Uterus (tissue), 4 donors: ENCODE measurements at regions of chr16 and their contacts with region 1.

Region 1: GRCh38 chr16:14300705-14301168 is 229.6 kb downstream of the MRTFB start:
- DNase-seq: peak; percentile 63 to 77
- H3K4me3 ChIP-seq: peak overlapping the region; percentile 78 to 99
- H3K27ac ChIP-seq: peak overlapping the region; percentile 68 to 76
- H3K4me1 ChIP-seq: no peaks in the 10 kb centered on the region
- H3K27me3 ChIP-seq: no peaks in the 10 kb centered on the region
- CTCF ChIP-seq: peak; percentile 57 to 71 (median 64)
- POLR2A ChIP-seq: no peak

Region 2: DNA sequence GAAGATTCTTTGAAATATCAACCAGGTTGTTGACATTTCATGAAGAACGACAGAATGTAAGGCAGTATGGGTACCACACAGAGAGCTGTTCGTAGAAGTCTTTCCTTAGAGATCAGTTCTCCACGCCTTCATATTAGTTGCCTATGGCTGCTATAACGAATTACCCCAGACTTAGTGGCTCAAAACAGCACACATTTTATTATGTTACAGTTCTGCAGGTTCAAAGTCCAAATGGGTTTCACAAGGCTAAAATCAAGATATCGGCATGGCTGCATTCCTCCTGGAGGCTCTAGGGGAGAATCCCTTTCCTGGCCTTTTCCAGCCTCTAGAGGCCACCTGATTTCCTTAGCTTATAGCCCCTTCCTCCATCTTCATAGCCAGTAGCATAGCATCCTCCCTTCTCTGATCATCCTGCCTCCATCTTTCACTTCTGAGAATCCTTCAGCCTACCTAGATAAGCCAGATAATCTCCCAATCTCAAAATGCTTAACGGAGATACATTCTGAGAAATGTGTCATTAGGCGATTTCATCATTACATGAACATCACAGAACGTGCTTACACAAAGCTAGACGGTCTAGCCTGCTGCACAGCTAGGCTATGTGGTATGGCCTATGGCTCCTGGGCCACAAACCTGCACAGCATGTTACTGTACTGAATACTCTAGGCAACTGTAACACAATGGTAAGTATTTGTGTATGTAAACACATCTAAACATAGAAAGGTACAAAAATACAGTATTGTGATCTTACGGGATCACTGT is 354.8 kb before region 1 on chr16:
- intact Hi-C with region 1: no loop called
- DNase-seq: no peak
- H3K4me3 ChIP-seq: no peak overlapping the region
- H3K27ac ChIP-seq: no peak overlapping the region
- H3K4me1 ChIP-seq: no peaks in the 10 kb centered on the region
- H3K27me3 ChIP-seq: no peaks in the 10 kb centered on the region
- CTCF ChIP-seq: no peak
- POLR2A ChIP-seq: no peak

Region 3: GRCh38 chr16:14070877-14071575 is 229.7 kb before region 1 on chr16 and contains the start of gene MRTFB:
- intact Hi-C with region 1: no loop called
- DNase-seq: peak; percentile 66 to 77
- H3K4me3 ChIP-seq: peak within 1 kb of the TSS; percentile 74 to 97
- H3K27ac ChIP-seq: peak within 1 kb of the TSS; percentile 77 to 91
- H3K4me1 ChIP-seq: no peaks in the 10 kb centered on the region
- H3K27me3 ChIP-seq: no peaks in the 10 kb centered on the region
- CTCF ChIP-seq: no peak
- POLR2A ChIP-seq: peak; percentile 60 to 78
- total RNA-seq, gene MRTFB: 49.8 to 178 (median 75.1) TPM

Region 4: DNA sequence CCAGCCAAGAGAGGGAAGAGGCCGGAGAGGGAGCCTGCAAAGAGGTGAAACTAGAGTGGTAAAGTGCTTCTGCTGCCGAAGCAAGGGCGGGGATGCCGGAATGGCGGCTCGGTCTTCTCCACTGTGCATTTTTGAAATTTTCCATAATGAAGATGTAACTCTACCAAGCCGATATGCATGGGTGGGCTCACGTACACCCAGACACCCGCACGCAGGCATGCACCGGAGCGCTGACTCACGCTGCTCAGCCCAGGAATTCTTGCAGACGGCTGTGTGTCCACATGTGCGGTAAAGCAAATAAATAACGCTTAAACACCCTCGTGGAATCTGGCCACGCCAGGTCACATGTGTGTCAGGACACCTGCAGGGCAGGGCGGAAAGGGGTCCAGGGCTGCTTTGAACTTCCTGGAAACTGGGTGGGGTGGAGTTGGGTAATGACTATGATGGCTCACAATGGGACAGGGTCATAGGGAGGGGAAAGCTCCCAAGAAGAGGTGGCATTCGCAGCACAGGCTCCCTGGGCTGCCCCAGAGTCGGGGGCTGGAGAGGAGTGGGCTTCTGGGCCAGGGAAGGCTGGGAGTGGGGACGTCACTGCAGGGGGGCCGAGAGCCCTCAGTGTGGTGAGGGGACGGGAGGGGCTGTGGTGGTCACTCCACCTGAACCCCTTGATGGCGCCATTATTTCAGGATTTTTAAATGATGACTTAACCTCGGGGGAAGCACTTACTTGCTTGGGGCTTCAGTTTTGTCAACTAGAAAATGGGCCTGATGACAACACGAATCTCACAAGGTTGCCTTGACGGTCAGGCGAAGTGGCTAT is 63.9 kb after region 1 on chr16:
- intact Hi-C with region 1: loop called (anchors 10 kb)
- DNase-seq: no peak
- H3K4me3 ChIP-seq: no peak overlapping the region
- H3K27ac ChIP-seq: no peak overlapping the region
- H3K4me1 ChIP-seq: no peaks in the 10 kb centered on the region
- H3K27me3 ChIP-seq: no peaks in the 10 kb centered on the region
- CTCF ChIP-seq: no peak
- POLR2A ChIP-seq: no peak

Region 5: DNA sequence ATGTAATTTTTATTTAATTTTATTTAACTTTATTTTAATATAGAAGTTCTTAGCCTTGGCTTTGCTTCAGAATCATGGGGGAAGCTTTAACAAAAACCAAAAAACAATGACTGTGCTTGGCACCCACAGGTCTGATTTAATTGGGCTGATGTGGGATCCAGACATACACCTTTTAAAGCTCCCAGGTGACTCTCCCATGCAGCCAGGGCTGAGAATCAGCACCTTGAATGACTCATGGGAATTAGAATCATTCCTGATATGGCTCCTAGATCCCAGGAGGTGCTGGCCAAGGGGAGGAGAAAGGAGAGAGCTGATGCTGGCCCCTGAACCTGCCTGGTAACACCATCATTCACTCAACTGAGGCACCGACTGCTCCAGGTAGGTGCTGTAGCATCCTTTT is 88.6 kb after region 1 on chr16:
- intact Hi-C with region 1: no loop called
- DNase-seq: no peak
- H3K4me3 ChIP-seq: no peak overlapping the region
- H3K27ac ChIP-seq: no peak overlapping the region
- H3K4me1 ChIP-seq: no peaks in the 10 kb centered on the region
- H3K27me3 ChIP-seq: no peaks in the 10 kb centered on the region
- CTCF ChIP-seq: no peak
- POLR2A ChIP-seq: no peak